ENCODE measurements at regions of chr3 and their contacts with region 1.

Region 1: DNA sequence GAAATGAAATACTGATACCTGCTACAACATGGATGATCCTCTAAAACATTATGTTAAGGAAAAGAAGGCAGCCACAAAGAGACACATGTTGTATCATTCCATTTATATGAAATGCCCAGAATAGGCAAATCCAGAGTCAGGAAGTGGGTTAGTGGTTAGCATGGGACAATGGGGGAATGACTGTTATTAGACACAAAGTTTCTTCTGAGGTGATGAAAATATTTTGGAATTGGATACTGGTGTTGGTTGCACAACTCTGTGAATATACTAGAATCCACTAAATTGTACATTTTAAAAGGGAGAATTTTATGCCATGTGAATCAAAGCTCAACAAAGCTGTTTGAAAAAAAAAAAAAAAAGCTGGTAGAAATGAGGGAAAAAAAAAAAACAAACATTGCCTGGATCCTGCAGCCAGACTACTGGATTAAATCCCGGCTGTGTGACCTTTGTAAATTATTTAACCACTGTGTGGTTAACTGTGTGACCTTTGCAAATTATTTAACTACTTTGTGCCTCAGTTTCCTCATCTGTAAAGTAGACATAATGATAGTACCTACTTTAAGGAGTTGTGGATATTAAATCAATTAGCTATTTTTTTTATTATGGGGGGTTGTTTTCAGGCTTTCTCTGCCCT is 75.6 kb upstream of the PRICKLE2 start:
- DNase-seq: peak; percentile 73
- H3K4me3 ChIP-seq: no peak overlapping the region
- H3K27me3 ChIP-seq: no peaks in the 10 kb centered on the region
- CTCF ChIP-seq: no peak

Region 2: DNA sequence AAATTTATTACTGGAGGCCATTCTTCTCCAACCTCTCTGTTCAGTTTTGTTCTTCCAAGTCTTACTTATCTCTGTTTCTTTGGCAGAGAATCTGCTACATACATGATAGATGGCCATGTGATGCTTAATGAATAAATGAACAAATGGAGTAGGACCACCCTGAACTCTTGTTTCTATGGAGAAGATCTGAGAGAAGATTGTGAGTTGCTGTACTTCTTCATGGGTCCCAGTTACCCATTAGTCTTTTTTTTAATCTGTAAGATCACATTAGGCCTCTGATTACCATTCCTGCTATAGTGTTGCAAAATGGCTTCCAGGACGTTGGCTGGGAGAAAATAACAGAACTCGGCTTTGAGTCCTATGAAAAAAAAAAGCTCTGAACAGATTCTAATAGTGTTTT is 1214.7 kb before region 1 on chr3:
- CTCF ChIA-PET with region 1: no interaction called
- POLR2A ChIA-PET with region 1: no interaction called
- DNase-seq: no peak
- H3K4me3 ChIP-seq: no peak overlapping the region
- H3K27me3 ChIP-seq: no peaks in the 10 kb centered on the region
- CTCF ChIP-seq: no peak

Region 3: GRCh38 chr3:64207289-64208080 is 93.4 kb before region 1 on chr3:
- CTCF ChIA-PET with region 1: no interaction called
- POLR2A ChIA-PET with region 1: interaction called, 23 read pairs
- DNase-seq: no peak
- H3K4me3 ChIP-seq: no peak overlapping the region
- H3K27me3 ChIP-seq: no peaks in the 10 kb centered on the region
- CTCF ChIP-seq: no peak

Region 4: GRCh38 chr3:64321747-64322146 is 20.8 kb after region 1 on chr3:
- CTCF ChIA-PET with region 1: interaction called, 4 read pairs
- POLR2A ChIA-PET with region 1: interaction called, 10 read pairs
- DNase-seq: no peak
- H3K4me3 ChIP-seq: no peak overlapping the region
- H3K27me3 ChIP-seq: no peaks in the 10 kb centered on the region
- CTCF ChIP-seq: no peak

Region 5: DNA sequence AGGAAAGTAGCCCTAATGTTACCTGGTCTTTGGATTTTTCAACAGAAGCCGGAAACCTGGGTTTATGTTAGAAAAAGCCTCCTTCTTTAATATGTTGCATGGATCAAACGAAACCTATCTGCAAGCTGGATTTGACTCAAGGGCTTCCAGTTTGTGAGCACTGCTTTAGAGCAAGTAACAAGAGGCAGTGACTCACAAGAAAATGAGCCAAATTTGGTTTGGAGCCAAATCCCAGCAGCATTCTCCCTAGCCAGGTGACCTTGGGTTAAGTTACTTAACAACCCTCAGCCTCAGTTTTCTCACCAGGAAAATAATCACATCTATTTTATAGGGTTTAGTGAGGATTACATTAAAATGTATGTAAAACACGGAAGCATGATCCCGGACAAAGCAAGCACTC is 139.6 kb after region 1 on chr3:
- CTCF ChIA-PET with region 1: no interaction called
- POLR2A ChIA-PET with region 1: no interaction called
- DNase-seq: no peak
- H3K4me3 ChIP-seq: no peak overlapping the region
- H3K27me3 ChIP-seq: peaks cover 20% of the 10 kb centered on the region
- CTCF ChIP-seq: no peak

Measured in BJ (cell line).